ENCODE measurements at regions of chr17 and their contacts with region 1.

Region 1: DNA sequence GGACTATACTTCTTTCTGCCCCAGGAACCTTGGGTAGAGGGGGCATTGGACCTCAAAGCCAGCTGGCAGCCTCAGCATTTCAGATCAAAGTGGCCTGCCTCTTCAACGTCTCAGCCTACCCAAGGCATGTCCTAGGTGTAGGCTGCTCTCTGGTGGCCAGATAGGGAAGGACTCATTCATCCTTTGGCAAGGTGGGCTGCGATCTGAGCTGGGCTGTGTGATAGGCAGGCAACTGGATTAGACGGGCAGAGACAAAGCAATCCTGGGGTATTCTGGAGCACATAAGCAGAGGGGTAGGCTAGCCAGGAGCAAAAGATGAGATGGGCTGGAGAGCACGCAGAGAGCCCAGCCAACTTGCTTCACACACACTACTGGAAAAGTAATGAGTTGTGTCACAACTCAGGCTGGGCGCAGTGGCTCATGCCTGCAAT is 8.8 kb upstream of the NAGLU start:
- DNase-seq: peak; percentile 79 to 91
- ATAC-seq: peak; percentile 85 to 92
- H3K4me3 ChIP-seq: no peak overlapping the region
- H3K27ac ChIP-seq: peak overlapping the region; percentile 50 to 80; a peak in 5 of 6 replicates
- H3K4me1 ChIP-seq: peaks cover 50% of the 10 kb centered on the region
- CTCF ChIP-seq: peak; percentile 98
- EP300 ChIP-seq: no peak
- POLR2A ChIP-seq: no peak
- RAD21 ChIP-seq: peak; percentile 99 to 100

Region 2: GRCh38 chr17:42312285-42313130 is 214.8 kb before region 1 on chr17:
- CTCF ChIA-PET with region 1: interaction called, 95 read pairs
- POLR2A ChIA-PET with region 1: no interaction called
- DNase-seq: peak; percentile 77 to 86
- ATAC-seq: peak; percentile 74 to 89
- H3K4me3 ChIP-seq: no peak overlapping the region
- H3K27ac ChIP-seq: peak overlapping the region; percentile 36 to 76; a peak in 3 of 6 replicates
- H3K4me1 ChIP-seq: peaks cover 13% of the 10 kb centered on the region
- CTCF ChIP-seq: peak; percentile 77
- EP300 ChIP-seq: no peak
- POLR2A ChIP-seq: no peak
- RAD21 ChIP-seq: peak; percentile 84 to 91

Region 3: GRCh38 chr17:42399948-42400843 is 127.1 kb before region 1 on chr17:
- CTCF ChIA-PET with region 1: interaction called, 38 read pairs
- POLR2A ChIA-PET with region 1: interaction called, 4 read pairs
- DNase-seq: no peak
- ATAC-seq: no peak; a peak in 1 of 6 replicates
- H3K4me3 ChIP-seq: no peak overlapping the region
- H3K27ac ChIP-seq: peak overlapping the region; percentile 1 to 44; a peak in 3 of 6 replicates
- H3K4me1 ChIP-seq: peaks cover 51% of the 10 kb centered on the region
- CTCF ChIP-seq: no peak
- EP300 ChIP-seq: no peak
- POLR2A ChIP-seq: no peak
- RAD21 ChIP-seq: no peak

Region 4: GRCh38 chr17:42414704-42415409 is 112.4 kb before region 1 on chr17:
- CTCF ChIA-PET with region 1: interaction called, 45 read pairs
- POLR2A ChIA-PET with region 1: interaction called, 11 read pairs
- DNase-seq: no peak
- ATAC-seq: no peak; a peak in 1 of 6 replicates
- H3K4me3 ChIP-seq: no peak overlapping the region
- H3K27ac ChIP-seq: peak overlapping the region in 1 of 2 experiments; percentile 40; a peak in 2 of 6 replicates
- H3K4me1 ChIP-seq: peaks cover 62% of the 10 kb centered on the region
- CTCF ChIP-seq: no peak
- EP300 ChIP-seq: no peak
- POLR2A ChIP-seq: no peak
- RAD21 ChIP-seq: no peak

Region 5: DNA sequence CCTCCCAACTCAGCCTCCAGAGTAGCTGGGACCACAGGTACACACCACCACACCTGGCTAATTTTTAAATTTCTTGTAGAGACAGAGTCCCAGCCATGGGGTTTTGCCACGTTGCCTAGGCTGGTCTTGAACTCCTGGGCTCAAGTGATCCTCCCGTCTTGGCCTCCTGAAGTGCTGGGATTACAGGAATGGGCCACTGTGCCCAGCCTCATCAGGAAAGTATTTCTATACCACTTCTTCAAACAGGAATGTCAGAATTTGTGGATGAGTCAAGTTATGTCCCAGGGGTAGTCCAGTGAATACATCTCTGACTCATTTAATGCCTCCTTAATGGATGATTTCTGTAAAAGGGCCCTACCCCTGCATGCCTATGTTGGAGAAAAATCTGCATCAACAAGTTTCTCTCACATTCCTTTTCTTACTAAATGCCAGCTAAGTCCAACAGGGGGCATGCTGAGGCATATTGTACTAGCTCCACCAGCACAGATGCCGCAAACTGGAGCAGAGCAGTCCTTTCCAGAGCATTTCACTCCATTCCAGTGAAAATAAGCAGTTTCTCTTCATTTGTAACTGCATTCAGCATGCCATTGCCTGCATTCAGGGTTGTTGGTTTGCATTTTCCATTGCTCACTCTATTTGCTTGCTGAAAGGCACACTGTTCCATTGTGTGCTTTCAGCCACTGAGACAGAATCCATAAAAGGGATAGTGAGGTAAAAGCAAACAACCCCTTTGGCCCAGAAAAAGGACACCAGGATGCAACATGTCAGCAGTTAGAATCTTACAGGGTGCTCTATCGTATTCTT is 98.9 kb before region 1 on chr17:
- CTCF ChIA-PET with region 1: interaction called, 213 read pairs
- POLR2A ChIA-PET with region 1: interaction called, 5 read pairs
- DNase-seq: peak; percentile 97 to 98
- ATAC-seq: peak; percentile 91 to 96
- H3K4me3 ChIP-seq: no peak overlapping the region
- H3K27ac ChIP-seq: peak overlapping the region; percentile 66 to 83
- H3K4me1 ChIP-seq: peaks cover 55% of the 10 kb centered on the region
- CTCF ChIP-seq: peak; percentile 84
- EP300 ChIP-seq: no peak
- POLR2A ChIP-seq: no peak
- RAD21 ChIP-seq: peak; percentile 84 to 86

Region 6: GRCh38 chr17:42459256-42459800 is 68.0 kb before region 1 on chr17:
- CTCF ChIA-PET with region 1: interaction called, 20 read pairs
- POLR2A ChIA-PET with region 1: interaction called, 4 read pairs
- DNase-seq: peak; percentile 68 to 74
- ATAC-seq: peak; percentile 77 to 79
- H3K4me3 ChIP-seq: peak overlapping the region; percentile 83
- H3K27ac ChIP-seq: peak overlapping the region; percentile 84 to 88
- H3K4me1 ChIP-seq: peaks cover 48% of the 10 kb centered on the region
- CTCF ChIP-seq: peak; percentile 79
- EP300 ChIP-seq: no peak
- POLR2A ChIP-seq: no peak
- RAD21 ChIP-seq: 0 out of 5 replicates have a peak, but pooled peaks of 1 of the 2 experiments have one; percentile 22

Region 7: GRCh38 chr17:42493319-42493718 is 34.0 kb before region 1 on chr17:
- CTCF ChIA-PET with region 1: interaction called, 14 read pairs
- POLR2A ChIA-PET with region 1: no interaction called
- DNase-seq: no peak
- ATAC-seq: no peak
- H3K4me3 ChIP-seq: no peak overlapping the region
- H3K27ac ChIP-seq: no peak overlapping the region
- H3K4me1 ChIP-seq: no peaks in the 10 kb centered on the region
- CTCF ChIP-seq: no peak
- EP300 ChIP-seq: no peak
- POLR2A ChIP-seq: no peak
- RAD21 ChIP-seq: no peak

Region 8: DNA sequence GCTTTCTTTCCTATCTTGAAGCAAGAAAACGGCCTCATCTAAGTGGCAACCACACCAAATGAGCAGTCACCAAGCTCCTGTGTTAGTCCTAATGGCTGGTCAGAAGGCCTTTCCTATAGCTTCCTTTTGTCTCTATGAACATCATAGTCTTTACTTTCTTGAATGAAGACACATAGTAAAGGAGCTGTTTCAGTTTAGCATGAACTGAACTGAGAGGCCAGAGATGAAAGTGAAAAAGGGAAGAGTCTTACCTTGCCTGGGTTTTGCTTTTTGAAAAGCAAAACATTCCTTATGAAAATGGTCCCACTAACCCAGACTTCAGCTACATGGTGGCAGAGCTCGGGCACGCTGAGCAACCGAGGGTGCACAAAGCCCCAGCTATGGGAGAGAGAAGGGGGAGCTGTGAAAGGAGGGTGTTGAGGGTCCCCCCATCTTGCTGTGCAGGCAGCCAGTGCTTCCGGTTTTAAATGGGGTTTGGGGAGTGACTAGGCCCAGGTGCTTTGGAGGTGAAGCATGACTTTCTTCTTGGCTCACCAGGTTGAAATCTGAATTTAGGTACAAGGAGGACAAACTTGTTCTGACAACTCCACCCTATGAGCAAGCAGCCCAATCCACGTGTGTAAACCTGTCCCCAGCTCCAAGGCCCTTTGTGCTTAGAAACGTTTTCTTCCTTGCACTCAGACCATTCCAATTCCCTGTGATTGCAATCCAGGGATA is 59.4 kb after region 1 on chr17:
- CTCF ChIA-PET with region 1: no interaction called
- POLR2A ChIA-PET with region 1: no interaction called
- DNase-seq: no peak
- ATAC-seq: no peak
- H3K4me3 ChIP-seq: no peak overlapping the region
- H3K27ac ChIP-seq: no peak overlapping the region
- H3K4me1 ChIP-seq: no peaks in the 10 kb centered on the region
- CTCF ChIP-seq: no peak
- EP300 ChIP-seq: no peak
- POLR2A ChIP-seq: no peak
- RAD21 ChIP-seq: no peak

Region 9: GRCh38 chr17:42642336-42642735 is 115.0 kb after region 1 on chr17:
- CTCF ChIA-PET with region 1: no interaction called
- POLR2A ChIA-PET with region 1: no interaction called
- DNase-seq: no peak
- ATAC-seq: peak; percentile 32 to 44; a peak in 2 of 6 replicates
- H3K4me3 ChIP-seq: no peak overlapping the region
- H3K27ac ChIP-seq: no peak overlapping the region
- H3K4me1 ChIP-seq: no peaks in the 10 kb centered on the region
- CTCF ChIP-seq: no peak
- EP300 ChIP-seq: no peak
- POLR2A ChIP-seq: no peak
- RAD21 ChIP-seq: no peak

Measured in A549 (cell line).